Vagina (tissue), 2 donors: ENCODE measurements at regions of chr18 and their contacts with region 1.

Region 1: DNA sequence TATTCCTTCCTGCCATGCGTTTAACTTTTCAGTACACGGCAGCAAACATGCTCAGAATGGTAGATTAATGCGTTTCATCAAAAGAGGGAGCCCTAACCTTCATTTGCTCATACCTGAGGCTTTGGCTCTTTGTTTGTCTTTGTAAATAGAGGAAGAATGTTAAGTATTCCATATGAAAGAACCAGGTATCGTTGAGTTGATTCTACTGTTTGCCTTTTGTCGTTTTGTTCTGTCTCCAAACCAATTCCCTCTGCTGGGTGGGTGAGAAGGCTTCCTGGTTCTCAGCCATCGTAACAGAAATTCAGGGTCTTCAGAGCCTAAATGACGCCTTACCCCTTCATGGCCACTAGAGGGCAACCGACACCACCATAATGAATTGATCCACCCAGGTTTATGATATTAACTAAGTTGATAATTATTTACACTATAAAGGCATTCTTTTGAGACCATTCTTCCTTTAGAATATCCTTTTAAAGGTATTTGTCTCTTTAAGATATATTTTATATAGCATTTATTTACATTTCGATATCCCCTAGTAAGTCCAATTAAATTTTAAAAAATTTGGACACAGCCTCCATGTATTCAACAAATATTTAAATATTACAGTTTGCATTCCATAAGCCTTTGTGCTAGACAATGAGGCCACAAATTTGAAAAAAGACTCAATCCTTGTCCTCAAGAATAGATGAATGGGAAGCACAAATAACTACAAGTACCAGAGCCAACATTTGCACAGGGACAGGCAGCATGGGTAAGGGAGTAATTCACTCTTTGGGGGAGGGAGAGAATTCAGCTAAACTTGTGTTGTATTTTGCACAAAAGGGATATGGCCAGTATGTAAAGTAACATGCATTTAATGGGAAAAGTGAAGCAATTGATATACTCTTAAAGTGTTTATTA is 48.1 kb downstream of the TIMM21 start:
- DNase-seq: no peak
- H3K4me3 ChIP-seq: no peak overlapping the region
- H3K27ac ChIP-seq: no peak overlapping the region
- H3K4me1 ChIP-seq: no peaks in the 10 kb centered on the region
- H3K27me3 ChIP-seq: no peaks in the 10 kb centered on the region
- CTCF ChIP-seq: peak; percentile 90 to 95 (median 94)
- POLR2A ChIP-seq: no peak

Region 2: GRCh38 chr18:73214967-73215366 is 981.5 kb before region 1 on chr18:
- intact Hi-C with region 1: no loop called
- DNase-seq: no peak
- H3K4me3 ChIP-seq: no peak overlapping the region
- H3K27ac ChIP-seq: no peak overlapping the region
- H3K4me1 ChIP-seq: no peaks in the 10 kb centered on the region
- H3K27me3 ChIP-seq: no peaks in the 10 kb centered on the region
- CTCF ChIP-seq: no peak
- POLR2A ChIP-seq: no peak

Region 3: DNA sequence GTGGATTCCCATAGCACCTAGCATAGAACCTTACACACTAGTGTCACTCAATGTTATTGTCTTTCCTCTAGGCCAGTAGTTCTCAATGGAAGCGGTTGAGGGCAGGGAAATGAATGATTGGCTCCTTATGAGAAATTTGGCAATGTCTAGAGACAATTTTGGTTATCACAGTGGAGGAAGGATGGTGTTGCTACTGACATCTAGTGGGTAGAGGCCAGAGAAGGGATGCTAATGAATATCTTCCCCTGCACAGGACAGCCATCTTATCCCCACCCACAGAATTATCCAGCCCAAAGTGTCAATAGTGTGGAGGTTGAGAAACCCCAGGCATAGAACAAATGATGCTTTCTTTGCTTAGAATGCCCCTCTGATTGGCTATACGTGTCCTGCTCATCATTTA is 134.9 kb after region 1 on chr18:
- intact Hi-C with region 1: no loop called
- DNase-seq: no peak
- H3K4me3 ChIP-seq: no peak overlapping the region
- H3K27ac ChIP-seq: no peak overlapping the region
- H3K4me1 ChIP-seq: no peaks in the 10 kb centered on the region
- H3K27me3 ChIP-seq: no peaks in the 10 kb centered on the region
- CTCF ChIP-seq: no peak
- POLR2A ChIP-seq: no peak

Region 4: DNA sequence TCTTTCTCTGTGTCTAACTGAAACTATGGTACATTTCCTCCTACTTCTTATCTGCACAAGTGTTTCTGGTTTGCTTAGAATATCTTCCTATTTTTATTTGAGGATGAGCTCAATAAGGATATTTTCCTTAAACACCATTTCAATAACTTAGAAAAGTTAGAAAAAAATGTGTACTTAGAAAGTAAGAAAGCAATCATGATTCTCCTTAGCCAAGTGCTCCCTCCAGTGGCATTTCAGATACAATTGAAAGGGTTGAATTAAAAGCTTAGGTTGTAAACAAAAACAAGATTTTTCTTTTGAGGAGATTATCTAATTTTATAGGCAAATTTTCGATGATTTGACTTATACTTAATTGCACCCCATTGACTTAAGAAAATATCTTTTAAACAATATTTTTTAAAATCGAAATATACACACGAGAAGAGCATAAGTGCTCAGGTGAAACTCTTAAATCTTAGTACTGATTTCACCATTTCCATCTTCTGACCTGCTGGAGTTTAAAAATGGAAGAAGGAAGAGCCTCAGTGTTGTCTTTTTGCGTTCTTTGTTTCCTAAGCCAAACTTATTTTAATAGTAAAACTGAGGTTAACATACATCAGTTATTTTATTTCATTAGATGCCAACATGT is 146.1 kb after region 1 on chr18:
- intact Hi-C with region 1: loop called (anchors 5 kb)
- DNase-seq: no peak
- H3K4me3 ChIP-seq: no peak overlapping the region
- H3K27ac ChIP-seq: no peak overlapping the region
- H3K4me1 ChIP-seq: no peaks in the 10 kb centered on the region
- H3K27me3 ChIP-seq: no peaks in the 10 kb centered on the region
- CTCF ChIP-seq: peak in 2 of 3 experiments; percentile 65 to 74
- POLR2A ChIP-seq: no peak

Region 5: DNA sequence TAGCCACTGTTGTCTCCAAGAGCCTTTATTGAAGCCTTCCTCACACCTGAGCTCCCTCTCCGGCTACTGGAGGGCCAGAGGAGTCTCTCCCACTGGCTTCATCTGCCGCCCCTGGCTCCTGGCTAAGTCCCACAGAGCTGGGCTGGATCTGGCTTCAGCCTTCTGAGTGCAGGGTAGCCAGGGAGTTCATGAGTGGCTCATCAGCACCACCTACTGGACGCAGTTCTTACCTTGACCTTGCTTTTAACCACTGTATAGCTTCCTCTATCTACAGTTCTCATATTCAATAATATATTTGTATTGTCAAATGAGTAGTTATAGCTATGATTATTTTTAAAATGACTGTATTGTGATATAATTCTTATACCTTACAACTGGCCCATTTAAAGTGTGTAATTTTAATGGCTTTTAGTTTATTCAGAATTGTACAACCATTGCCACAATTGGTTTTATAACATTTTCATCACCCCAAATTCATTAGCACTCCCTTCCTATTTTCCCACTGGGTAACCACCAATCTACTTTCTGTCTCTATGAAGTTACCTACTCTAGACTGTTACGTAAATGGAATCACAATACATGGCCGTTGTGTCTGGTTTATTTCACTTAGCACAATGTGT is 355.6 kb after region 1 on chr18:
- intact Hi-C with region 1: loop called (anchors 10 kb)
- DNase-seq: no peak
- H3K4me3 ChIP-seq: no peak overlapping the region
- H3K27ac ChIP-seq: no peak overlapping the region
- H3K4me1 ChIP-seq: no peaks in the 10 kb centered on the region
- H3K27me3 ChIP-seq: no peaks in the 10 kb centered on the region
- CTCF ChIP-seq: peak; percentile 66 to 73 (median 67)
- POLR2A ChIP-seq: no peak